MCF 10A (cell line): ENCODE measurements at regions of chr6 and their contacts with region 1.

Region 1: DNA sequence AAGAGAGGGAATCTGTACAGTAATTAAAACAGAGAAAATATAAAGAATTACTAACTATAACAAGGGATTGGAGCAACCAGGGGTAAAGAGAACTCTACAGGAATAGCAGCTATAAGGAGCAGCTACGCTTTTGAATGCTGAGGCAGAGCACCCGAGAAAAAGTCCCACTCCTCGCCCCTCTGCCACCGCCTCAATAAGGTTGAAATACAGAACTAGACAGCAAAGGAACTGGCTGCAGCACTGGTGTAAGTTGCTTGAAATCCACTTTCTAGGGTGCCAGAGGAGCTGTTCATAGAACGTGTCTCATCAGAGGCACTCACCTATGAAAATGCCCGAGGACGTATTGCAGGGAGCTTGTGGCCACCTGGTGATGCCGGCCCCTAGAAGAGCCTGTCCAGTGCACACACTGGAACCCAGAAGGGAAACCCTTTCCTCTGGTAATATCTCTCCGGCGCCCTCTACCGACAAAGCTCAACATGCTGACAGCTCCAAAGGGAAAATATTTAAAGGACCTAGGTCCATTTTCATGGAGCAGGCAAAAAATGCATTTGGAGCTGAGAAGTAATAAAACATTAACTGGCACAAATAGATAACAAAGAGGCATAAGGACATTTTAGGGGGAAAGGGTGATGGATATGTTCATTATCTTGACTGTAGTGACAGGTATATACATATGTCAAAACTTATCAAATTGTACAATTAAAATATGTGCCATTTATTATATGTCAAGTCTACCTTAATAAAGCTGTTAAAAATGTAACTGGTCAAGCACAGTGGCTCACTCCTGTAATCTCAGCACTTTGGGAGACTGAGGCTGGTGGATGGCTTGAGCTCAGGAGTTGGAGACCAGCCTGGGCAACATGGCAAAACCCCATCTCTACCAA is 137.4 kb upstream of the HDAC2 start:
- DNase-seq: peak; percentile 81
- H3K4me3 Mint-ChIP-seq: no peak overlapping the region
- H3K27ac Mint-ChIP-seq: no peak overlapping the region
- H3K4me1 Mint-ChIP-seq: no peaks in the 10 kb centered on the region
- H3K27me3 Mint-ChIP-seq: peaks cover 63% of the 10 kb centered on the region
- CTCF ChIP-seq: peak; percentile 75

Region 2: GRCh38 chr6:113584767-113585166 is 523.6 kb before region 1 on chr6:
- CTCF ChIA-PET with region 1: no interaction called
- POLR2A ChIA-PET with region 1: no interaction called
- intact Hi-C with region 1: no loop called
- DNase-seq: no peak
- H3K4me3 Mint-ChIP-seq: no peak overlapping the region
- H3K27ac Mint-ChIP-seq: no peak overlapping the region
- H3K4me1 Mint-ChIP-seq: peaks cover 6% of the 10 kb centered on the region
- H3K27me3 Mint-ChIP-seq: no peaks in the 10 kb centered on the region
- CTCF ChIP-seq: no peak

Region 3: GRCh38 chr6:113980937-113981554 is 127.3 kb before region 1 on chr6:
- CTCF ChIA-PET with region 1: interaction called, 29 read pairs
- POLR2A ChIA-PET with region 1: interaction called, 3 read pairs
- intact Hi-C with region 1: no loop called
- DNase-seq: peak; percentile 25
- H3K4me3 Mint-ChIP-seq: no peak overlapping the region
- H3K27ac Mint-ChIP-seq: no peak overlapping the region
- H3K4me1 Mint-ChIP-seq: no peaks in the 10 kb centered on the region
- H3K27me3 Mint-ChIP-seq: no peaks in the 10 kb centered on the region
- CTCF ChIP-seq: peak; percentile 49

Region 4: DNA sequence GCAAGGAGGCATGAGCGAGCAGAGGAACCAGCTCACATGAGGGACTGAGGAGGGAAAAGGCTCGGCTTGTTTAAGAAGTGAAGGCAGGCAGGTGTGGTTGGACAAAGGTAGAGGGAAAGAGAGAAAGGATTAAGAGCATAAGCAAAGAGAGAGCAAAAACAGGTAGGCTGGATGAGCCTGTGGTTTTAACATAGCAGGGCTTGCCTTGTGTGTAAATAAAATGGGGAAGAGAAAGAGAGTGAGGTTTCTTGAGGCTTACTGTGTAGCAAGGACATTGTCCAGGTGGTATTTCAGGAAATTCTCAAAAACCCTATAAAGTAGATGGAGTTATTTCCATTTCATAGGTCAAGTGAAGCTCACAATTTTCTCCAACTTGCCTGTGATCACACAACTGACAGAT is 43.5 kb before region 1 on chr6:
- CTCF ChIA-PET with region 1: interaction called, 11 read pairs
- POLR2A ChIA-PET with region 1: no interaction called
- intact Hi-C with region 1: no loop called
- DNase-seq: no peak
- H3K4me3 Mint-ChIP-seq: no peak overlapping the region
- H3K27ac Mint-ChIP-seq: no peak overlapping the region
- H3K4me1 Mint-ChIP-seq: no peaks in the 10 kb centered on the region
- H3K27me3 Mint-ChIP-seq: peaks cover 16% of the 10 kb centered on the region
- CTCF ChIP-seq: no peak

Region 5: DNA sequence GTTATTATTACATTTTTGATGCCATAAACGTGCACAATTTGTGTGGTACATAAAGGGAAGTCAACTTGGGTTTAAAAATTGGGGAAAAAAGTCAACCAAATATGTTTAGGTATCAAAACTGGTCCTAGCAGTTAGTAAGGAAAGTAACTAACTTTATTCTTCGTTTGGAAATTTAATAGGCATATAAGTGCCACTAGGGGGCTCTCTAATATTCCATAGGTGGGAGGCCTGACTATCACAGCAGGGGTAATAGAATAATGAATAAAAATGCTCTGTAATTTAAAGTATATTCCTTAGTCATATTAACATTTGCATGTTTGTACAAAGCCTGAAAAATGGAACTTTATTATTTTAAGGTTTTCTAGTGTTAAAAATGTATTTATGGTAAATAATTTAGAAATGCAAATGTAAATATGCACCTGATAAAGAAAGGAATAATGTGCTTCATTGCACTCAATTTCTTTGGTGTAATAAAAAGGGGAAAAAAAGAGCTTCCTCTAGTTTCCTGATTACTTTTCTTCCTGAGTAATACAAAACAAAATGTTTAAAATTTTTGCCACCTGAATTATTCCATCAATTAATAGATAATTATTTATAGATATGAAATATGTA is 11.7 kb before region 1 on chr6:
- CTCF ChIA-PET with region 1: interaction called, 33 read pairs
- POLR2A ChIA-PET with region 1: no interaction called
- intact Hi-C with region 1: no loop called
- DNase-seq: peak; percentile 51
- H3K4me3 Mint-ChIP-seq: no peak overlapping the region
- H3K27ac Mint-ChIP-seq: no peak overlapping the region
- H3K4me1 Mint-ChIP-seq: no peaks in the 10 kb centered on the region
- H3K27me3 Mint-ChIP-seq: no peaks in the 10 kb centered on the region
- CTCF ChIP-seq: peak; percentile 37

Region 6: DNA sequence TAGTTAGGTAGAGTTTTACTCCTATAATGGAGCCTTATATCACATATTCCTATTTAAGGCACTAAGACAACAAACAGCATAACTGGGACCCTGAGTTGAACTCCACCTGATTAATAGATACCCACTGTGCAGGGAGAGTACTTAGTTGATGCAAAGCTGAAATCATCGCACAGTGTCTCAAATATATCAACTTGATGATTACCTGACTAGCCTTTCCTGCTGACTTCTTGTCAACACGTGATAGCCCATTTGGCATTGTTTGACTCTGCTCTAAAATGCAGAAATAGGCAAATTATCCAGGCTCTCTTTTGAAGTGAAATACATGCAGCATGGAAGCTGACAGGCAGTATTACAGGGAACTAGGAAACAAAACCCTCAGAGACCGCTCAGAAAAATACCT is 17.2 kb after region 1 on chr6:
- CTCF ChIA-PET with region 1: interaction called, 10 read pairs
- POLR2A ChIA-PET with region 1: no interaction called
- intact Hi-C with region 1: no loop called
- DNase-seq: no peak
- H3K4me3 Mint-ChIP-seq: no peak overlapping the region
- H3K27ac Mint-ChIP-seq: no peak overlapping the region
- H3K4me1 Mint-ChIP-seq: no peaks in the 10 kb centered on the region
- H3K27me3 Mint-ChIP-seq: peaks cover 84% of the 10 kb centered on the region
- CTCF ChIP-seq: no peak

Region 7: DNA sequence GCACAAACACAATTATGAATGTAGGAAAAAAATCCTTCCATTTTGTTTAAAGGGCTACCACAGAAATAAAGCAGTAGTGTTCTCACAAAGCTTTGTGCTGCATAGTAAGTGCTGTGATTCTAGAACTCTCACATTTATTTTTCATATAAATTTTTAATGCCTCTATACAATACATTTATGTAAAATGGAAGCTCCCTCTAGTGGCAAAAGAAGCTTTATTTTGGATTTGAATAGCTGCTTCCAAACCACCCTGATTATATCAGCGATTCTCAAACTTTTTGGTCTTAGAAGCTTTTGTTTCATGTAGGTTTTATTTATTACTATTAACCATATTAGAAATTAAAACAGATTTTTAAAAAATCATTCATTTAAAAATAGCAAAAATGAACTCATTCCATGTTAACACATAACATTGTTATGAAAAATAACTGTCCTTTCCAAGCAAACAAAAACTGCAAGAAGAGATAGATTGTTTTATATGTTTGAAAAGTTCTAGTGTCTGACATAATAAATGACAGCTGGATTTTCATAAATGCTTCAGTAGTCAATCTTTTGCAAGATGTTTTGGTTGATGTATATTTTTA is 196.0 kb after region 1 on chr6:
- CTCF ChIA-PET with region 1: interaction called, 6 read pairs
- POLR2A ChIA-PET with region 1: no interaction called
- intact Hi-C with region 1: loop called (anchors 2 kb)
- DNase-seq: peak; percentile 27
- H3K4me3 Mint-ChIP-seq: no peak overlapping the region
- H3K27ac Mint-ChIP-seq: no peak overlapping the region
- H3K4me1 Mint-ChIP-seq: no peaks in the 10 kb centered on the region
- H3K27me3 Mint-ChIP-seq: peaks cover 51% of the 10 kb centered on the region
- CTCF ChIP-seq: peak; percentile 25